ENCODE measurements at regions of chr2 and their contacts with region 1.

Region 1: DNA sequence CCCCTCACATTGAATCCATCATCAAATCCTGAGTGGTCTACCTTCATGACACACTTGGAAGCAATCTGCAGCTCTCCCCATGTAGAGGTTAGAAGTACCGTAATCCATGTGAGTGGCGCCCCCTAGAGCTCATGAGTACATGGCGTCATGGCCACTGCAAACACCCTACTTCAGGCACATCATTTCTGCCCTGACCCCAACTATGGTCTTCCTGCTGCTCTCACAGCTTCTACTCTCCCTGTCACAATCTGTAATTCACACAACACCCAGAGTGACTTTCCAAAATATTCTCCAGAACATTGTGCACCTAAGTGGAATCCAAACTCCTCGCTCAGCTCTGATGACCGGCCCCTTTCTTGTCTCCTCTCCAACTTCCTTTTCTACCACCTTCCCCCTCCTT is 141.9 kb downstream of the ANKRD44 start:
- DNase-seq: peak; percentile 30 to 80 (median 75)
- ATAC-seq: peak; percentile 91
- H3K4me3 ChIP-seq: no peak overlapping the region
- H3K4me3 Mint-ChIP-seq: no peak overlapping the region
- H3K27ac ChIP-seq: peak overlapping the region in 1 of 2 experiments; percentile 32
- H3K27ac Mint-ChIP-seq: peak overlapping the region; percentile 85
- H3K4me1 ChIP-seq: peaks cover 66% of the 10 kb centered on the region
- H3K4me1 Mint-ChIP-seq: peaks cover 78% of the 10 kb centered on the region
- H3K27me3 ChIP-seq: no peaks in the 10 kb centered on the region
- H3K27me3 Mint-ChIP-seq: no peaks in the 10 kb centered on the region
- CTCF ChIP-seq: peak; percentile 65

Region 2: GRCh38 chr2:197011799-197012641 is 156.7 kb before region 1 on chr2:
- CTCF ChIA-PET with region 1: interaction called, 4 read pairs
- POLR2A ChIA-PET with region 1: no interaction called
- intact Hi-C with region 1: loop called in 1 of 2 experiments (anchors 5 kb)
- DNase-seq: peak in 3 of 9 experiments; percentile 14 to 69 (median 57)
- ATAC-seq: peak; percentile 59
- H3K4me3 ChIP-seq: no peak overlapping the region
- H3K4me3 Mint-ChIP-seq: no peak overlapping the region
- H3K27ac ChIP-seq: no peak overlapping the region
- H3K27ac Mint-ChIP-seq: peak overlapping the region; percentile 46
- H3K4me1 ChIP-seq: no peaks in the 10 kb centered on the region
- H3K4me1 Mint-ChIP-seq: peaks cover 6% of the 10 kb centered on the region
- H3K27me3 ChIP-seq: no peaks in the 10 kb centered on the region
- H3K27me3 Mint-ChIP-seq: no peaks in the 10 kb centered on the region
- CTCF ChIP-seq: peak; percentile 78

Region 3: GRCh38 chr2:197130318-197130717 is 38.4 kb before region 1 on chr2:
- CTCF ChIA-PET with region 1: interaction called, 18 read pairs
- POLR2A ChIA-PET with region 1: no interaction called
- intact Hi-C with region 1: loop called in 1 of 2 experiments (anchors 5 kb)
- DNase-seq: peak in 3 of 9 experiments; percentile 21 to 65 (median 52)
- ATAC-seq: peak; percentile 87
- H3K4me3 ChIP-seq: peak overlapping the region in 1 of 2 experiments; percentile 13
- H3K4me3 Mint-ChIP-seq: peak overlapping the region; percentile 40
- H3K27ac ChIP-seq: peak overlapping the region in 1 of 2 experiments; percentile 28
- H3K27ac Mint-ChIP-seq: peak overlapping the region; percentile 92
- H3K4me1 ChIP-seq: peaks cover 57% of the 10 kb centered on the region
- H3K4me1 Mint-ChIP-seq: peaks cover 71% of the 10 kb centered on the region
- H3K27me3 ChIP-seq: no peaks in the 10 kb centered on the region
- H3K27me3 Mint-ChIP-seq: no peaks in the 10 kb centered on the region
- CTCF ChIP-seq: no peak

Region 4: GRCh38 chr2:197152451-197153228 is 16.1 kb before region 1 on chr2:
- CTCF ChIA-PET with region 1: interaction called, 14 read pairs
- POLR2A ChIA-PET with region 1: interaction called, 3 read pairs
- intact Hi-C with region 1: loop called in 1 of 2 experiments (anchors 2 kb)
- DNase-seq: peak in 5 of 9 experiments; percentile 34 to 71 (median 38)
- ATAC-seq: peak; percentile 89
- H3K4me3 ChIP-seq: peak overlapping the region in 1 of 2 experiments; percentile 16
- H3K4me3 Mint-ChIP-seq: peak overlapping the region; percentile 65
- H3K27ac ChIP-seq: peak overlapping the region; percentile 14 to 55
- H3K27ac Mint-ChIP-seq: peak overlapping the region; percentile 95
- H3K4me1 ChIP-seq: peaks cover 56% of the 10 kb centered on the region
- H3K4me1 Mint-ChIP-seq: peaks cover 79% of the 10 kb centered on the region
- H3K27me3 ChIP-seq: no peaks in the 10 kb centered on the region
- H3K27me3 Mint-ChIP-seq: no peaks in the 10 kb centered on the region
- CTCF ChIP-seq: peak; percentile 58

Region 5: DNA sequence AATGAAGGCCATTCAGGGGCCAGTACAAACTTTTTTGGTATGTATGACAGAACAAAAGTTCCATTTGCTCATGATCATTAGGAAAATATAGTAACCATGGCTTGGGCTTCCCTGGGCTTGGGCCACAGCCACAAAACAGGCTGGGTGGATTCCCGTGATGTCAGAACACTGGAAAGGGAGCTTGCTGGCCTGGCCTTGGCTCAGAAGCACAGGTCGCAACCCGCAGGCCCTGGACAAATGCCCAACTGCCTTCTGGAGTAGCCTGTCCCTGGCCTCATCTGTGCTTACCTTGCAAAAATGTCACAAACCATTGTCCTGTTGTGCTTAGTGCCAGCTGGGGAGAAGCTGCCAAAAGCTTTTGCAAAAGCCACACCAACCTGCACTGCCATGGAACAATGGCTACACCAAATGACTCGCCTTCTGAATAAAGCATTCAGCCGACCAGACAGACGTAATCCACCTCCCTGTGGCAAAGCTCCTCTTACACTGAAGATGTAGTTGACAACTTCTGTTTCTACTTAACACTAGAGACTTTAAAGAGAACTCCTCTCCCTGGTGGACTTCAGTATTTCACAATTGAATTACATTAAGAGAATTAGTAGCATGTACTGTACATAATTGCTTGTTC is 16.4 kb after region 1 on chr2:
- CTCF ChIA-PET with region 1: interaction called, 3 read pairs
- POLR2A ChIA-PET with region 1: interaction called, 4 read pairs
- intact Hi-C with region 1: loop called in 1 of 2 experiments (anchors 2 kb)
- DNase-seq: no peak
- ATAC-seq: no peak
- H3K4me3 ChIP-seq: no peak overlapping the region
- H3K4me3 Mint-ChIP-seq: no peak overlapping the region
- H3K27ac ChIP-seq: no peak overlapping the region
- H3K27ac Mint-ChIP-seq: peak overlapping the region; percentile 86
- H3K4me1 ChIP-seq: peaks cover 48% of the 10 kb centered on the region
- H3K4me1 Mint-ChIP-seq: peaks cover 92% of the 10 kb centered on the region
- H3K27me3 ChIP-seq: no peaks in the 10 kb centered on the region
- H3K27me3 Mint-ChIP-seq: no peaks in the 10 kb centered on the region
- CTCF ChIP-seq: no peak

Region 6: GRCh38 chr2:197378494-197379307 is 210.0 kb after region 1 on chr2:
- CTCF ChIA-PET with region 1: interaction called, 7 read pairs
- POLR2A ChIA-PET with region 1: no interaction called
- intact Hi-C with region 1: loop called (anchors 5 kb)
- DNase-seq: peak; percentile 24 to 78 (median 62)
- ATAC-seq: peak; percentile 57
- H3K4me3 ChIP-seq: no peak overlapping the region
- H3K4me3 Mint-ChIP-seq: no peak overlapping the region
- H3K27ac ChIP-seq: no peak overlapping the region
- H3K27ac Mint-ChIP-seq: no peak overlapping the region
- H3K4me1 ChIP-seq: peaks cover 7% of the 10 kb centered on the region
- H3K4me1 Mint-ChIP-seq: peaks cover 12% of the 10 kb centered on the region
- H3K27me3 ChIP-seq: no peaks in the 10 kb centered on the region
- H3K27me3 Mint-ChIP-seq: no peaks in the 10 kb centered on the region
- CTCF ChIP-seq: peak; percentile 93